T-cell (primary cell): ENCODE measurements at regions of chr17 and their contacts with region 1.

Region 1: GRCh38 chr17:78206298-78206697 is 7.8 kb upstream of the BIRC5 start:
- DNase-seq: no peak
- ATAC-seq: no peak
- H3K4me3 ChIP-seq: no peak overlapping the region
- H3K4me3 Mint-ChIP-seq: no peak overlapping the region
- H3K27ac ChIP-seq: no peak overlapping the region
- H3K27ac Mint-ChIP-seq: no peak overlapping the region
- H3K4me1 ChIP-seq: no peaks in the 10 kb centered on the region
- H3K4me1 Mint-ChIP-seq: no peaks in the 10 kb centered on the region
- H3K27me3 ChIP-seq: no peaks in the 10 kb centered on the region
- H3K27me3 Mint-ChIP-seq: no peaks in the 10 kb centered on the region

Region 2: DNA sequence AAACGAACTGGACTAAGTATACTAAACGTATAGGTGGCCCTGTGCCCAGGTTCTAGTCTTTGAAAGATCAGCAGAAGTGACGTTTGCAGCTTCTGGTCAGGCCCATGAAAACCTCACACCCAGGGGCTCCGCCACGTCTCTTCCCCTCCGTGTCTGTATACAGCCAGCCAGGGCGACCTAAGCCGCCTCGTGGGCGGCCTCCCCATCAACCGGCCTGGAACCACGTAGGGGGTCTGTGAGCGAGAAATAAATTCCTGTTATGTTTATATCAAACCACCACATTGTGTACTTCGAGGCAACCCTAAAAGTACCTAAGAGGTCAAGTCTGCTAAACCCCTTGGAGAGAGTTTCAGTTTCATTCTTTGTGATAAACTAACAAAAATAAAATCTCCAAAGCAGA is 26.2 kb before region 1 on chr17:
- CTCF ChIA-PET with region 1: no interaction called
- POLR2A ChIA-PET with region 1: no interaction called
- DNase-seq: no peak
- ATAC-seq: no peak
- H3K4me3 ChIP-seq: no peak overlapping the region
- H3K4me3 Mint-ChIP-seq: peak overlapping the region in 1 of 3 donors; percentile 58
- H3K27ac ChIP-seq: no peak overlapping the region
- H3K27ac Mint-ChIP-seq: peak overlapping the region; percentile 45 to 73
- H3K4me1 ChIP-seq: peaks cover 3 to 19% of the 10 kb centered on the region in 2 experiments
- H3K4me1 Mint-ChIP-seq: peaks cover 20 to 29% (median 23%) of the 10 kb centered on the region in 3 donors
- H3K27me3 ChIP-seq: no peaks in the 10 kb centered on the region
- H3K27me3 Mint-ChIP-seq: no peaks in the 10 kb centered on the region

Region 3: GRCh38 chr17:78224231-78225087 is 18.2 kb after region 1 on chr17:
- CTCF ChIA-PET with region 1: no interaction called
- POLR2A ChIA-PET with region 1: no interaction called
- DNase-seq: no peak
- ATAC-seq: no peak
- H3K4me3 ChIP-seq: no peak overlapping the region
- H3K4me3 Mint-ChIP-seq: no peak overlapping the region
- H3K27ac ChIP-seq: no peak overlapping the region
- H3K27ac Mint-ChIP-seq: no peak overlapping the region
- H3K4me1 ChIP-seq: peaks cover 0 to 12% of the 10 kb centered on the region in 2 experiments
- H3K4me1 Mint-ChIP-seq: peaks cover 4 to 14% (median 6%) of the 10 kb centered on the region in 3 donors
- H3K27me3 ChIP-seq: peaks cover 0 to 23% of the 10 kb centered on the region in 2 experiments
- H3K27me3 Mint-ChIP-seq: peaks cover 5 to 6% of the 10 kb centered on the region in 2 donors

Region 4: DNA sequence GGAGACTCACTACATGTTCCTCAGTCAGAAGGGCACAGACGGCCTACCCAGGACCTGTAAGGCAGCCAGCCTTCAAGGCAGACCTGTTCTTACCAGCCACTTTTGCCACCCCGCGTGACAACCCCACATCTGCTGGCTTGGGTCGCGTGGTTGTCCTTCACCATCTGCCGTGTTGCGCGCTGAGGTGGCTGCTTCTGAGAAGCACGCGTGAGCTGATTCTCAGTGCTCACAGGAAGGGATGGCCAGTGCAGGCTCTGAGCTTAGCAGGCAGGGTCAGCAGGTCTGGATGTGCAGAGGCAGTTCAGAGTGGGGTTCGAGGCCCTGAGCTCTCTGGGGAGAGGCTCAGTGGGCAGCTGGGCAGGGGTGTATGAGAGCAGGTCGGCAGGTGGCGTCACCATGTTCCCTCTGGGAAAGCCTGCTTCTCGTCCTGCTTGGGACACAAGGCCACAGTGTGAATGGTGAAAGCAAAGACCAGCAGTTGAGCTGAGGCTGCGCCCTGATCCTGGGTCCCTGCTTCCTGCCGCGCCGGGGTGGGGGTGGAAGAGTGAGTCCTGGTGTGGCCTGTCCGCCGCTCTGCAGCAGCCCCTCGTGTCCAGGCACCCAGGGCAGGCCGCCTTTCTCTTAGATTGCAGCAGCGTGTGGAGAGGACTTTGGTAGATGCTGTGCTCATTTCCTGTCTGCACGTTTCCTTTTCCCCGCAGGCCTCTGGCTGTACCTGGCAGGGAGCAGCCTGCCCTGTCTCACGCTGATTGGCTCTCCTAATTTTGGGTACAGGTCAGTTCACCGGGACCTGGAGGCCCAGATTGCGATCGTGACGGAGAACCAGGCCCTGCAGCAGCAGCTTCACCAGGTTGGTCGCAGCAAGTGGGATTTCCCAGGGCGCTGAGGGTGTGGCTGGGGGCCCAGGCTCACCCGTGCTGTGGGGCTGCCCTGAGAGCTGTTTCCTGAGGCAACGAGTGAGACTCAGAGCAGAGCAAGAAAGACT is 208.2 kb after region 1 on chr17:
- CTCF ChIA-PET with region 1: no interaction called
- POLR2A ChIA-PET with region 1: interaction called in 1 of 2 experiments, 14 read pairs
- DNase-seq: peak; percentile 27 to 71 (median 50)
- ATAC-seq: peak; percentile 76 to 86 (median 82)
- H3K4me3 ChIP-seq: peak overlapping the region in 1 of 2 donors; percentile 17
- H3K4me3 Mint-ChIP-seq: peak overlapping the region; percentile 36 to 79 (median 47)
- H3K27ac ChIP-seq: peak overlapping the region; percentile 78
- H3K27ac Mint-ChIP-seq: peak overlapping the region; percentile 86 to 91
- H3K4me1 ChIP-seq: peaks cover 20 to 54% of the 10 kb centered on the region in 2 experiments
- H3K4me1 Mint-ChIP-seq: peaks cover 52 to 71% (median 62%) of the 10 kb centered on the region in 3 donors
- H3K27me3 ChIP-seq: no peaks in the 10 kb centered on the region
- H3K27me3 Mint-ChIP-seq: no peaks in the 10 kb centered on the region

Region 5: GRCh38 chr17:79563237-79564013 is 1357.1 kb after region 1 on chr17:
- CTCF ChIA-PET with region 1: no interaction called
- POLR2A ChIA-PET with region 1: no interaction called
- DNase-seq: no peak
- ATAC-seq: no peak
- H3K4me3 ChIP-seq: no peak overlapping the region
- H3K4me3 Mint-ChIP-seq: no peak overlapping the region
- H3K27ac ChIP-seq: no peak overlapping the region
- H3K27ac Mint-ChIP-seq: no peak overlapping the region
- H3K4me1 ChIP-seq: peaks cover 0 to 3% of the 10 kb centered on the region in 2 experiments
- H3K4me1 Mint-ChIP-seq: no peaks in the 10 kb centered on the region
- H3K27me3 ChIP-seq: peaks cover 0 to 49% of the 10 kb centered on the region in 2 experiments
- H3K27me3 Mint-ChIP-seq: peaks cover 26 to 39% of the 10 kb centered on the region in 2 donors